ENCODE measurements at regions of chr7 and their contacts with region 1.

Region 1: DNA sequence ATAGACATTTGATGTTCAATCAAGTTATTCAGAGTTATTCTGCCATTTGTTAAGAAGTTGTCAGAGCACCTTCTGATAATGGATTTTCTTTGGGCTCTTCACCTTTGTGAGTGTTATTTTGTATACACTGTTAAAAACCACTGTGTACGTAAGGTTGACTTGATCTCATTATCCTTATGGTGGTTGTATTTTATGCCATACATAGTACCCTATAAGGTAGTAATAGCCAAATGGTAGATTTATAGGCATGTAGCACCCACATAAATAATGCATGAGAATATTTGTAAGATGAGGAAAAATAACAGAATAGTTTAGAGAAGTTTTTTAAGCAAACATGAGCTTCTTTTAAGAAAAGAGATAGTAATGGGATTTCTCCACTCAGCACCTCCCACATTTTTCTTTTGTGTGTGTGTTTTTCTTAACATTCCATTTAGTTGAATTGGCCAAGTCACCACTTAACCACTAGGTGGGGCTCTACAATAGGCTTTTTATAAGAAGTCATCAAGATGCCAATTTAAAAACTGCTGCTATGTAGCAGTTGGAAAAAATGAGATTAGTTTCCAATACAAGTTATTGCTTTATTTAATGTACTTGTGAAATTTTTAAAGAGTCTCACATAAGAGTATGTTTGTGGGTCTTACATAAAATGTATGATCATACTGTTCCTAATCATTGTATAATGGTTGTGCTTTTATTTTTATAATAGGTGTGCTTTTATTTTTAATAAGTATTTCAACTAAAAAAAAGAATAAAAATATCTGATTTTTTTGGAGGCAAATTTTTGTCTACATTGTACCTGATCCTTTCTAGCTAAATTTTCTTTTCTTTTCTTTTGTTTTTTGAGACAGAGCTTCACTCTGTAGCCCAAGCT is 41.1 kb upstream of the STMP1 start:
- DNase-seq: peak; percentile 41
- ATAC-seq: no peak
- H3K4me3 Mint-ChIP-seq: no peak overlapping the region
- H3K27ac Mint-ChIP-seq: no peak overlapping the region
- H3K4me1 Mint-ChIP-seq: no peaks in the 10 kb centered on the region
- H3K27me3 Mint-ChIP-seq: no peaks in the 10 kb centered on the region
- CTCF ChIP-seq: peak; percentile 90

Region 2: DNA sequence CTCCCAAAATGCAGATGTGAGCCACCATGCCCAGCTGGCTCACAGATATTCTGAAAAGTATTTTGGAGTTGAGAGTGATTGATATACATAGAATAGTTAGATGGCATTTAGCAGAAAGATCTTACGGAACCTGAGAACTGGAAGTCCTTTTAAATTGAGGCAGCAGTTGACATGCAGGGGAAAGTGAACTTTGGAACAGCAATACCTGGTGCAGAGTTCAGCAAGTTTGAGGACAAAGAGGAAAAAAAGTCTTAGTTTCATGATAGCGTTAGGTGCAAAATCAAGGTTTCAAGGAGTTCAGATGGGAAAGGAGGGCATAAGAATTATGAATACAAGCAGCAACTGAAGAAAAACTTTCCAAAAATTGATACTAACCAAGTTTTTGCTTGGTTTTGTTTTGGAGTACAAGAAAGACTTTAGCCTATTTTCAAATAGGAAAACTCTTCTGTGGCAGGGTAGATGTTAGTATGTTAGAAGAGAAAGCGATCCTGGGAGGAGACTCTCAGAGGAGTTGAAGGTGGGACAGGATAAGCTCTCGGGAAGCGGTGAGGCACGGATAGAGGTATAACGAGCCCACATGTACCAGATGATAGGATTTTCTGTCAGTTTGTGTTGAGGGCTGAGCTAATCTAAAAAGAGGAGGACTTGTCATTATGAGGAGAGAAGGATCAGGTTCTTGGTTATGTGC is 13.1 kb after region 1 on chr7:
- CTCF ChIA-PET with region 1: interaction called, 15 read pairs
- POLR2A ChIA-PET with region 1: no interaction called
- intact Hi-C with region 1: no loop called
- DNase-seq: no peak
- ATAC-seq: no peak
- H3K4me3 Mint-ChIP-seq: no peak overlapping the region
- H3K27ac Mint-ChIP-seq: no peak overlapping the region
- H3K4me1 Mint-ChIP-seq: no peaks in the 10 kb centered on the region
- H3K27me3 Mint-ChIP-seq: no peaks in the 10 kb centered on the region
- CTCF ChIP-seq: no peak

Measured in activated CD8-positive, alpha-beta T cell treated with anti-CD3 and anti-CD28 coated beads for 36 hours (primary cell).